ENCODE measurements at regions of chr17 and their contacts with region 1.

Region 1: GRCh38 chr17:7484067-7484918 is at the start of gene POLR2A:
- DNase-seq: peak; percentile 98 to 99 (median 99)
- ATAC-seq: peak; percentile 84 to 90 (median 87)
- H3K4me3 ChIP-seq: peak within 1 kb of the TSS; percentile 35 to 85 (median 72)
- H3K27ac ChIP-seq: peak within 1 kb of the TSS; percentile 94 to 100 (median 100)
- H3K4me1 ChIP-seq: peaks cover 8 to 76% (median 55%) of the 10 kb centered on the region in 12 donors
- H3K27me3 ChIP-seq: no peaks in the 10 kb centered on the region
- CTCF ChIP-seq: peak in 1 of 12 donors; percentile 4
- POLR2A ChIP-seq: peak; percentile 99 to 100
- total RNA-seq, gene POLR2A: 31.4 to 77.6 (median 50.7) TPM

Region 2: GRCh38 chr17:7403977-7404736 is 80.1 kb before region 1 on chr17 and contains the start of gene TMEM256:
- intact Hi-C with region 1: loop called in 3 of 10 experiments (anchors 1 to 5 kb)
- DNase-seq: peak; percentile 99
- ATAC-seq: peak; percentile 93 to 97 (median 96)
- H3K4me3 ChIP-seq: peak within 1 kb of the TSS; percentile 49 to 88 (median 72)
- H3K27ac ChIP-seq: peak within 1 kb of the TSS; percentile 83 to 98 (median 92)
- H3K4me1 ChIP-seq: peaks cover 5 to 34% (median 17%) of the 10 kb centered on the region in 12 donors
- H3K27me3 ChIP-seq: peaks cover 0 to 5% (median 0%) of the 10 kb centered on the region in 9 donors
- CTCF ChIP-seq: no peak
- POLR2A ChIP-seq: peak; percentile 94 to 99
- total RNA-seq, gene TMEM256: 51.9 to 78.7 (median 69.5) TPM

Region 3: DNA sequence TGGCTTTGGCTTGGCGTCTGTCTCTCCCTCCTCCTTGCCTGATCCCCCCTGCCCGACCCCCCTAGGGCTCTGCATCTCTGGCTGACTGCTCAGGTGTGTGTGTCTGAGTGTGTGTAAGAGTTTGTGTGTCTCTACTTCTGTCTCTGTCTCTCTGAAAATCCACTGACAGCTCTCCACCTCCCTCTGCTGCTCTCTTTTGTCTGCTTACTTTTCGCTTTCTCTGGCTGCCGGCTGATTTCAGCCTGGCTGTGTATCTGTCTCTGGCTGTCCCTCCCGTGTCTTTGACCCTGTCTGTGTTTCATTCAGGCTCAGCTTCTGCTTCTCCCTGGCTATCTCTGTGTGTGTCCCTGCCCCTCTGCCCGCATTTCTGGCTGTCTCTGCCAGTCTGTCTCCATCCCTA is 68.0 kb before region 1 on chr17:
- intact Hi-C with region 1: no loop called
- DNase-seq: peak in 1 of 5 donors; percentile 13
- ATAC-seq: no peak
- H3K4me3 ChIP-seq: no peak overlapping the region
- H3K27ac ChIP-seq: no peak overlapping the region
- H3K4me1 ChIP-seq: no peaks in the 10 kb centered on the region
- H3K27me3 ChIP-seq: no peaks in the 10 kb centered on the region
- CTCF ChIP-seq: no peak
- POLR2A ChIP-seq: no peak

Region 4: DNA sequence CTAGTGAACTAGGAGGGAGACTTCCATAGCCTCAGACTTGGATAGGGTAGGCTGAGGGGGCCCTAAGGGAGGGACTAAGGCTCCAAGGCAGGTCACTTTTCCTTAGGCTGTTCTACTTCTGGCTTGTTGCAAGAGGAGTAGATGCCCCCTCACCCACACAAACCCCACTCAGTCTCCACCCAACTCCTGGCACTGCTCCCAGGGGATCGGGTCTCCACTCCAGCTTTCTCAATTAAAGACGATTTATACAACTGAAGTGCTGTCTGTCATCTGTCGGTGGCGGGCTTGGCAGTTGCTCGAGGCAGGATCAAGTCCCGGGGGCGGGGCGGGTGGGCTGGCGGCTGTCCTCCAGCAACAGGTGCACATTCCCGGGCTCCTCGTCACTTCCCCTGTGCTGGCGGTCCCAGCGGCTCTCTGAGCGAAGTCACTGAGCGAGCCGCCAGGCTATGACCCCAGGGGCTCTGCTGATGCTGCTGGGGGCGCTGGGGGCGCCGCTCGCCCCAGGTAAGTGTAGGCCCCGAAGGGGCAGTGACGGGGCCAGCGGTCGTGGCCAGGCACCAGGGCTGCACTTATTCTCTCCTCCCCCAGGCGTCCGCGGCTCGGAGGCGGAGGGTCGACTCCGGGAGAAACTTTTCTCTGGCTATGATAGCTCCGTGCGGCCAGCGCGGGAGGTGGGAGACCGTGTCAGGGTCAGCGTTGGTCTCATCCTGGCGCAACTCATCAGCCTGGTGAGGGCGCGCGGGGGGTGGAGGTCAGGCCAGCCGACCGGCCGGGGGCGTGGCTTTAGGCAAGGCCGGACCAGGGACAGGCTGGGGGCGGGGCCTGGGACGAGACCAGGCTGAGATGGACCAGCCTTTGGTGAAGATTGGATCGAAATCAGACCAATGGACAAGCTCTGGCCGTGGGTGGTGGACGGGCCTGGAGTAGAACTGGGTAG is 39.3 kb before region 1 on chr17 and contains the start of gene CHRNB1:
- intact Hi-C with region 1: loop called in 3 of 10 experiments (anchors 5 kb)
- DNase-seq: peak; percentile 82 to 90 (median 86)
- ATAC-seq: peak; percentile 80 to 92 (median 90)
- H3K4me3 ChIP-seq: peak within 1 kb of the TSS; percentile 40 to 64 (median 54)
- H3K27ac ChIP-seq: peak within 1 kb of the TSS in 10 of 12 donors; percentile 27 to 77 (median 65)
- H3K4me1 ChIP-seq: peaks cover 0 to 35% (median 17%) of the 10 kb centered on the region in 12 donors
- H3K27me3 ChIP-seq: peaks cover 0 to 48% (median 6%) of the 10 kb centered on the region in 9 donors
- CTCF ChIP-seq: peak in 3 of 12 donors; percentile 13 to 18 (median 16)
- POLR2A ChIP-seq: no peak
- total RNA-seq, gene CHRNB1: 8.2 to 14.2 (median 11.0) TPM

Region 5: DNA sequence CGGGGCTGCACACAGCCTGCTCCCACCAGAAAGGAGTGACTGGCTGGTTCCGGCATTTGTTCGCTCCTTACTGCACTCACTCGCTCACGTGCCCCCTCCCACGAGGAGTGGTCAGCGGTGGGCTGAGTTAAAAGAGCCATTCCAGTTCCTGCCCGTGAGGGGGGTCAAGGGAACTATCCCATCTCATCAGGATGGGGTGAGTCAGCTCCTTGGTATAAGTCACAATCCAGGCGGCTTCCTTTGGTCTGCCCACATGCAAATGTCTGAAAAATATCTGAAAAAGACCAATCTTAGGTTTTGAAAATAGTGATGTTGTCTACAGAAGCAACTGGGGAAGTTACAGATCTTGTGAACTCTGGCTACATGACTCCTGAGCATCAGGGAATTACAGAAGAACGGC is 54.6 kb after region 1 on chr17:
- intact Hi-C with region 1: no loop called
- DNase-seq: no peak
- ATAC-seq: no peak
- H3K4me3 ChIP-seq: no peak overlapping the region
- H3K27ac ChIP-seq: no peak overlapping the region
- H3K4me1 ChIP-seq: peaks cover 0 to 1% (median 0%) of the 10 kb centered on the region in 12 donors
- H3K27me3 ChIP-seq: no peaks in the 10 kb centered on the region
- CTCF ChIP-seq: no peak
- POLR2A ChIP-seq: no peak

Region 6: GRCh38 chr17:7561028-7561575 is 76.8 kb after region 1 on chr17:
- intact Hi-C with region 1: loop called in 1 of 10 experiments (anchors 2 kb)
- DNase-seq: peak; percentile 90 to 94 (median 92)
- ATAC-seq: peak; percentile 67 to 80 (median 77)
- H3K4me3 ChIP-seq: peak overlapping the region; percentile 58 to 98 (median 93)
- H3K27ac ChIP-seq: peak overlapping the region; percentile 80 to 98 (median 94)
- H3K4me1 ChIP-seq: peaks cover 11 to 75% (median 57%) of the 10 kb centered on the region in 12 donors
- H3K27me3 ChIP-seq: no peaks in the 10 kb centered on the region
- CTCF ChIP-seq: peak; percentile 78 to 90 (median 86)
- POLR2A ChIP-seq: no peak

Measured in heart left ventricle (tissue), 16 donors.